Spleen (tissue), 13 donors: ENCODE measurements at regions of chr3 and their contacts with region 1.

Region 1: GRCh38 chr3:100463002-100463401 is 29.4 kb upstream of the TMEM45A start:
- DNase-seq: no peak
- H3K4me3 ChIP-seq: no peak overlapping the region
- H3K27ac ChIP-seq: no peak overlapping the region
- H3K4me1 ChIP-seq: peaks cover 0 to 12% (median 0%) of the 10 kb centered on the region in 6 donors
- H3K27me3 ChIP-seq: no peaks in the 10 kb centered on the region
- CTCF ChIP-seq: peak; percentile 16 to 65 (median 53)
- POLR2A ChIP-seq: no peak

Region 2: DNA sequence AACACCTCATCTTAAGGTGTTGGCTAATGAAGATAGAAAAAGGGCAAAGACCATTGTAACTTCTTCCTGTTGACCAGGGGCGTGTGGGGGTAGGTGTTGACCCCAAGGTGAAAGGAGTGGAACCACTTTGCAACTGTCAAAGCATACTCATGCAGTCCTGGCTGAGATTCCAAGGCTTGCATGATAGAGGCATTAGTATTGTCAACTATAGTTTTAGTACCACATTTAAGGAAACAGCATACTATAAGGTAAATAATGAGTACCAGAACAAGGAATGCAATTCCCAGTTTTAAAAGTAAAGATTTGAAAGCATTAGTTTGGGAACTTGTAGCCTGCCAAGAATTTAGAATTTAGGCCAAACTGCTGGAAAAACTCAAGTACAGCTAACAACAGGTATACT is 118.6 kb after region 1 on chr3:
- intact Hi-C with region 1: loop called (anchors 10 kb)
- DNase-seq: no peak
- H3K4me3 ChIP-seq: no peak overlapping the region
- H3K27ac ChIP-seq: no peak overlapping the region
- H3K4me1 ChIP-seq: no peaks in the 10 kb centered on the region
- H3K27me3 ChIP-seq: no peaks in the 10 kb centered on the region
- CTCF ChIP-seq: no peak
- POLR2A ChIP-seq: no peak